ENCODE measurements at regions of chr19 and their contacts with region 1.

Region 1: DNA sequence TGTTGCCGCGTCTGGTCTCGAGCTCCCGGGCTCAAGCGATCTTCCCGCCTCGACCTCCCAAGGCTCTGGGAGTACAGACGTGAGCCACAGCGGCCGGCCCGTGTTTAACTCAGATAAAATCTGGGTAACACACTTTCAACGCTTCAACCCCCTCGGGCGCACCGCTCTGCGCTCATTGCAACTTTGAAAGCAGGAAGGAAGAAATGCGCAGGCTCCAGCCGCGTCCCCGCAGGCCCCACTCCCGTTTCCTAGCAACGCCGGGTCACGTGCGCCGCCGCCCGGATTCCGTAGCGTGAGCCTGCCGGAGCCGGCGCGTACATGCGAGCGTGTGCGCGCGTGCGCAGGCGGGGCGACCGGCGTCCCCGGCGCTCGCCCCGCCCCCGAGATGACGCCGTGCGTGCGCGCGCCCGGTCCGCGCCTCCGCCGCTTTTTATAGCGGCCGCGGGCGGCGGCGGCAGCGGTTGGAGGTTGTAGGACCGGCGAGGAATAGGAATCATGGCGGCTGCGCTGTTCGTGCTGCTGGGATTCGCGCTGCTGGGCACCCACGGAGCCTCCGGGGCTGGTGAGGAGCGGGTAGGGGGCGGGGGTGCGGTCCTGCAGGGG is at the start of gene BSG:
- DNase-seq: peak; percentile 99
- H3K4me3 ChIP-seq: peak within 1 kb of the TSS; percentile 98 to 100 (median 100)
- H3K27ac ChIP-seq: peak within 1 kb of the TSS; percentile 96 to 98 (median 97)
- H3K4me1 ChIP-seq: peaks cover 0 to 65% (median 54%) of the 10 kb centered on the region in 4 donors
- H3K27me3 ChIP-seq: no peaks in the 10 kb centered on the region
- CTCF ChIP-seq: no peak
- EP300 ChIP-seq: peak in 1 of 4 donors; percentile 58
- POLR2A ChIP-seq: peak; percentile 74 to 83
- total RNA-seq, gene BSG: 423 to 500 (median 482) TPM

Region 2: GRCh38 chr19:633068-633785 is 61.0 kb after region 1 on chr19 and contains the start of gene POLRMT:
- intact Hi-C with region 1: loop called (anchors 5 kb)
- DNase-seq: peak; percentile 99
- H3K4me3 ChIP-seq: peak within 1 kb of the TSS; percentile 71 to 95 (median 86)
- H3K27ac ChIP-seq: peak within 1 kb of the TSS; percentile 70 to 76 (median 72)
- H3K4me1 ChIP-seq: peaks cover 0 to 30% (median 23%) of the 10 kb centered on the region in 4 donors
- H3K27me3 ChIP-seq: no peaks in the 10 kb centered on the region
- CTCF ChIP-seq: peak in 1 of 4 experiments; percentile 19
- EP300 ChIP-seq: peak in 1 of 4 donors; percentile 12
- POLR2A ChIP-seq: no peak
- total RNA-seq, gene POLRMT: 18.2 to 26.3 (median 22.3) TPM

Region 3: GRCh38 chr19:1269065-1269477 is 696.8 kb after region 1 on chr19 and contains the start of gene CIRBP:
- intact Hi-C with region 1: loop called (anchors 10 kb)
- DNase-seq: peak; percentile 100
- H3K4me3 ChIP-seq: peak within 1 kb of the TSS; percentile 38 to 94 (median 74)
- H3K27ac ChIP-seq: peak within 1 kb of the TSS; percentile 94 to 100 (median 97)
- H3K4me1 ChIP-seq: peaks cover 0 to 84% (median 81%) of the 10 kb centered on the region in 4 donors
- H3K27me3 ChIP-seq: no peaks in the 10 kb centered on the region
- CTCF ChIP-seq: no peak
- EP300 ChIP-seq: peak in 1 of 4 donors; percentile 62
- POLR2A ChIP-seq: peak; percentile 94 to 95
- total RNA-seq, gene CIRBP: 602 to 1,004 (median 791) TPM